HEK293 (cell line): ENCODE measurements at regions of chr10 and their contacts with region 1.

Region 1: GRCh38 chr10:80202934-80203834 is 2.2 kb downstream of the ANXA11 start:
- H3K4me3 ChIP-seq: peak overlapping the region; percentile 77
- H3K27ac ChIP-seq: peak overlapping the region; percentile 76
- H3K4me1 ChIP-seq: peaks cover 4% of the 10 kb centered on the region; the same call in 1 of the 2 replicates
- CTCF ChIP-seq: peak; percentile 81

Region 2: GRCh38 chr10:79948976-79949722 is 254.0 kb before region 1 on chr10 and contains the start of gene SFTPD:
- CTCF ChIA-PET with region 1: no interaction called
- POLR2A ChIA-PET with region 1: no interaction called
- H3K4me3 ChIP-seq: no peak within 1 kb of the TSS
- H3K27ac ChIP-seq: no peak within 1 kb of the TSS
- H3K4me1 ChIP-seq: no peaks in the 10 kb centered on the region
- CTCF ChIP-seq: no peak

Region 3: DNA sequence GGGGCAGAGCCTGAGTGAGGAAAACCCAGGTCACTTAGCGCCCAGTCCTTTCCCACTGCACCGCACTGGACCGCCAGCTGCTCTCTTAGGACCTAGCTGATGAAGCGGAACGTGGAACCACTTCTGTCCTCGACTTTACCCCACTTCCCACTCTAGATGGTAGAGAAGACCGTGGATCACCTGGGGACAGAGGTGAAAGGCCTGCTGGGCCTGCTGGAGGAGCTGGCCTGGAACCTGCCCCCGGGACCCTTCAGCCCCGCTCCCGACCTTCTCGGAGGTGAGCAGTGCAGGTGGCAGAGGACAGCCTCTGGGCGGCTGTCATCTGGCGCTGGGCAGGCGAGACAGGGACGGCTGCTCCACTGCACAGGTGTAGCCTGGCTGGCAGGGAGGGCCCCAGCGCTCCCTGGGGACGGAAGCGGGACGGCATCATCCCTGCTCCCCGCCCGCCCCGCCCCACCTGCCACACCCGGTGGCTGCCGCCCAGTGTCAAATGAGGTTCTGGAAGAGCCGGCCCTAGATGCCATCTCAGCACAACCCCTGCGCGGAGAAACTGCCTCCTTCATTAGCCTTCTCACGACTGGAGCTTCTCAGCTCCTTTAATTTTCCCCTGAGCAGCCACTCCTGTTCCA is 59.0 kb before region 1 on chr10:
- CTCF ChIA-PET with region 1: interaction called, 19 read pairs
- POLR2A ChIA-PET with region 1: no interaction called
- H3K4me3 ChIP-seq: peak overlapping the region; percentile 23
- H3K27ac ChIP-seq: no peak overlapping the region
- H3K4me1 ChIP-seq: peaks cover 2% of the 10 kb centered on the region; the same call in 1 of the 2 replicates
- CTCF ChIP-seq: no peak; the same call in 1 of the 2 replicates

Region 4: GRCh38 chr10:80855348-80855971 is 652.3 kb after region 1 on chr10:
- CTCF ChIA-PET with region 1: no interaction called
- POLR2A ChIA-PET with region 1: no interaction called
- H3K4me3 ChIP-seq: no peak overlapping the region
- H3K27ac ChIP-seq: no peak overlapping the region
- H3K4me1 ChIP-seq: no peaks in the 10 kb centered on the region
- CTCF ChIP-seq: peak; percentile 22; the same call in 1 of the 2 replicates